Activated T-helper 1 cell treated with anti-CD3 and anti-CD28 coated beads, Interleukin-12 subunit alpha, Interleukin-12 subunit beta, Interleukin-2, Interleukin-4 antibody, amounts not matched to agents 30 ng/mL and 10 ng/mL and 1 ng/mL, durations not matched to agents 14 hours and 24 hours and 36 hours (primary cell): ENCODE measurements at regions of chr13 and their contacts with region 1.

Region 1: DNA sequence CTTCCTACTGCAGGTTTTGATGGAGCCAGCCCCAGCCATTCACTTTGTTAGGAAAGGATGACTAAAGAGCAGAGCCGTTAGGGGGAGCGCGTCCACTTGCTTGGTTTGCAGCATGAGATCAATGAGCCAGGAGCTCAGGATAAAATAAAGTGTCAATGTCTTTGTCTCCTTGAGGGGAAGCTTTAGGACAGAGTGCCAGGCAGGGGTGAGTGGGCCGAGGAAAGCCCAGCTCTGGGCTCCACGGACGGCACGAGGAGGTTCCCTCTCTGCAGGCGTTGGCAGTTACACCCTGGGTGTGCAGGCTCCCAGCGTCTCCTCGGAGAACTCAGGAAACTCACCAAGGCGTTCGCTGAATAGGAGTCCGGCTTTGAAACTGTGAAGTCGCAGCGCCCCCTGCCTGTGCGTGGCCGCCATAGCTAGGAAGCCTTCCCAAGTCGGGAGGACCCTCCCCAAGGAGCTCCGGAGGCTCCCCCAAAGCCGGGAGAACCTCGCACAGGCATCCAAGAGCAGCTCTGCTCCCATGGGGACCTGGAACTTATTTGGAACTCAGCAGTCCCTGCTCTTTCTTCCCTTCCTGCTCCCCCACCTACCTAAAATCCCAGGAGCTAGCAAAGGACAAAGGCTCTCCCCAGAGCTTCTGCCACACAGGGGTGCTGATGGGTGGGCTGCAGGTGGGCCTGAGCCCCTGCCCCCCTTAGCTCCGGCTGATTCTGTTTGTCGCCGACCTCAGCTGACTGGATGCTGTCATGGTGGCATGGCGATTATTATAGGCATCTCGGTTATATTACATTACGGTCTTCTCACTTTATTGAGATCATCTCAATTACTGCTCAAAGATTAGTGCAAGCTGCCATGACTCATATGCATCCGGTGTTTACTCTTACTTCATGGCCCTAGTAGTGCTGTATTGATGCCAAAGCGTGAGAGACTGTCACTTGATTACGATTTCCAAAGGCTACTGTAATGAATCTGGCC is 34.4 kb downstream of the GSX1 start:
- DNase-seq: peak; percentile 52
- H3K4me3 Mint-ChIP-seq: no peak overlapping the region
- H3K27ac Mint-ChIP-seq: no peak overlapping the region
- H3K4me1 Mint-ChIP-seq: no peaks in the 10 kb centered on the region
- H3K27me3 Mint-ChIP-seq: peaks cover 50% of the 10 kb centered on the region

Region 2: GRCh38 chr13:26985285-26985878 is 841.3 kb before region 1 on chr13:
- intact Hi-C with region 1: loop called (anchors 1 kb)
- DNase-seq: peak; percentile 61
- H3K4me3 Mint-ChIP-seq: no peak overlapping the region
- H3K27ac Mint-ChIP-seq: no peak overlapping the region
- H3K4me1 Mint-ChIP-seq: peaks cover 19% of the 10 kb centered on the region
- H3K27me3 Mint-ChIP-seq: peaks cover 7% of the 10 kb centered on the region

Region 3: GRCh38 chr13:27374650-27375049 is 452.0 kb before region 1 on chr13:
- intact Hi-C with region 1: loop called (anchors 1 kb)
- DNase-seq: peak; percentile 38
- H3K4me3 Mint-ChIP-seq: no peak overlapping the region
- H3K27ac Mint-ChIP-seq: no peak overlapping the region
- H3K4me1 Mint-ChIP-seq: peaks cover 26% of the 10 kb centered on the region
- H3K27me3 Mint-ChIP-seq: peaks cover 26% of the 10 kb centered on the region

Region 4: DNA sequence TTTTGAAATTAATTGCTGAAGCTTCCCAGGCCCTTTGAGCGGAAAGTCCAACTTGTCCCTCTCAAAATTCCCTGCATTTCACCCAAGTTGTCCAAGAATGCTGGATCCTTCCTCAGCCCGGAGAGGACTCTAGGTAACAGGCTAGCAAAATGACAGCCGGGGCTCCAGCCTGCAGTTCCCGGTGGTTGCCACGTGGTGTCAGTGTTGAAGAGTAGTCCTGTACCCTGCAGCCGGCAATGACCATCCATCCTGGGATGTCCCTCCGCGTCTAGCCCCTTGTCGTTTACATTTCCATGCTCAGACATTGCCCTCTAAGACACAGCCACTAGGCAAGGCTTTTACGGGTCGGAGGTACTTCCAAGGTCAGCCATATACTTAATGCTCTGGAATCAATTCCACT is 344.9 kb before region 1 on chr13:
- intact Hi-C with region 1: loop called (anchors 5 kb)
- DNase-seq: peak; percentile 9
- H3K4me3 Mint-ChIP-seq: no peak overlapping the region
- H3K27ac Mint-ChIP-seq: no peak overlapping the region
- H3K4me1 Mint-ChIP-seq: peaks cover 20% of the 10 kb centered on the region
- H3K27me3 Mint-ChIP-seq: peaks cover 5% of the 10 kb centered on the region

Region 5: GRCh38 chr13:27792393-27793218 is 34.1 kb before region 1 on chr13 and contains the start of gene GSX1:
- intact Hi-C with region 1: loop called (anchors 2 kb)
- DNase-seq: peak; percentile 16
- H3K4me3 Mint-ChIP-seq: peak within 1 kb of the TSS; percentile 71
- H3K27ac Mint-ChIP-seq: peak within 1 kb of the TSS; percentile 83
- H3K4me1 Mint-ChIP-seq: peaks cover 23% of the 10 kb centered on the region
- H3K27me3 Mint-ChIP-seq: peaks cover 76% of the 10 kb centered on the region
- total RNA-seq, gene GSX1: not detected in 2 replicates